MCF 10A (cell line): ENCODE measurements at regions of chr5 and their contacts with region 1.

Region 1: DNA sequence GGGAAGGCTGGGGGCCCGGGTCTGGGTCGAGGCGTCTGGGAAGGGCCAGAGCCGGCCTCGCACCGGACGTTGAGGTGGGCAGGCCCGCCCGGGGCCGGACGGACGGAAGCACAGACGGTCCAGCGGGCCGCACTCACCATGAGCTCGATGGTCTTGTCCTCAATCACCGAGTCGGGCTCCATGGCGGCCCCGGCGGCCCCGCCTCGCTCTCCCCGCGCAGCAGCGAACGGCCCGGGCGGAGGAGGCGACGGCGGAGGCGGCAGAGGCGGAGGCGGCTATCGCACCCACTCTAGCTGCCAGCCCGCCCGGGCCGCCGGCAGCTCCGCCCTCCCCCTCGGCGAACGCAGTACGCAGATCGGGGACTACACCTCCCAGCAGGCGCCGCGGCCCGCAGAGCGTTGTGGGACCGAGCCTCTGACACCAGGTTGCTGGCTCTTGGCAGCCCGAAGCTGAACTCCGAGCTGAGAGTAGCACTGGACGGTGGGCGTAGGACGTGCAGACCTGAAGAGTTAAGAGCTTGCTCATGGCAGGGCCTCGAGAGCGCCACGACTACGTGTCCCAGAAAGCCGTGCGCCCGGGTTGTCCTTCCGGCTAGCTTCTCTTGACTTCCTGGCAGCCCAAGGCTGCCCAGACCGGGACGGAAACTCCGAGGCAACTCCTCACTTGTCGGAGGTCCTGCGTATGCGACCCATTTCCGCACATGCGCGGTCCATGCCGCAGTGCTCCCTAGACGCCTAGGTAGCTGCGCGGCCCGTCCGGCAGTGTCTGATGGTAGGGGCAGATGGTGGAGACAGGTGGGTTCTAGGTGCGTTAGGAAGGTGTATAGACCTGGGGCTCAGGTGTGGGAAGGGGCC is at the start of gene FBXW11:
- DNase-seq: peak; percentile 99
- H3K4me3 Mint-ChIP-seq: peak within 1 kb of the TSS; percentile 90
- H3K27ac Mint-ChIP-seq: peak within 1 kb of the TSS; percentile 95
- H3K4me1 Mint-ChIP-seq: peaks cover 51% of the 10 kb centered on the region
- H3K27me3 Mint-ChIP-seq: no peaks in the 10 kb centered on the region
- CTCF ChIP-seq: no peak
- total RNA-seq, gene FBXW11: 64.7 and 82.7 TPM in 2 replicates

Region 2: GRCh38 chr5:170937914-170938313 is 1068.6 kb before region 1 on chr5:
- CTCF ChIA-PET with region 1: no interaction called
- POLR2A ChIA-PET with region 1: no interaction called
- intact Hi-C with region 1: no loop called
- DNase-seq: no peak
- H3K4me3 Mint-ChIP-seq: no peak overlapping the region
- H3K27ac Mint-ChIP-seq: no peak overlapping the region
- H3K4me1 Mint-ChIP-seq: no peaks in the 10 kb centered on the region
- H3K27me3 Mint-ChIP-seq: no peaks in the 10 kb centered on the region
- CTCF ChIP-seq: no peak

Region 3: DNA sequence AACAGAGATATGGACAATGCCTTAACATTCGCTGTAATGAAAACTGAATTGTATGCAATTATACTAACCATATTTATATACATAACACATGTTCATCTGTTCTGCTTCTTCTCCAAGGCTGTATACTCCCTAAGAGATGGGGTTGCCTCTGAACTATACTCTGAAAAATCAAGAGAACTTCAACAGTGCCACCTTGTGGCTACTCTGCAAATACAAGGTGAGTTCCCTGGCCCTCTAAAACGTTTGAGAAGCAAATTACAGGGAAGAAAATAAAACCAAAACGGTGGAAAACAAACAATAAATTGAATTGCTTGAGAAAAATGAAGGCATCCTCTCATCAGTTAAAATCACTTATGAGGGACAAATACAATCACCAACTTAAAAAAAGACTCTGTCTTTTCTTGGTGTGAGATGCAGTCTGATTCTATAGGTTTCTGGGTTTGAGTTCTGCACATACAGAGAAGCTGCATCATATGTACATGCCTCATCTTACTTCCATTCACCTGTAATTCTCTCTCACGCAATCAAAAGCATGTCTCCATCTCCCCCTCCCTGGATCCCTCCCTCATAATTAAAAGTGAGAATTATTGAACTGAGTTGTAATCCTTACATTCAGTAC is 98.7 kb before region 1 on chr5:
- CTCF ChIA-PET with region 1: interaction called, 153 read pairs
- POLR2A ChIA-PET with region 1: interaction called, 40 read pairs
- intact Hi-C with region 1: loop called (anchors 1 kb)
- DNase-seq: peak; percentile 79
- H3K4me3 Mint-ChIP-seq: no peak overlapping the region
- H3K27ac Mint-ChIP-seq: no peak overlapping the region
- H3K4me1 Mint-ChIP-seq: peaks cover 10% of the 10 kb centered on the region
- H3K27me3 Mint-ChIP-seq: no peaks in the 10 kb centered on the region
- CTCF ChIP-seq: peak; percentile 92

Region 4: GRCh38 chr5:171961117-171961516 is 45.4 kb before region 1 on chr5:
- CTCF ChIA-PET with region 1: interaction called, 6 read pairs
- POLR2A ChIA-PET with region 1: interaction called, 49 read pairs
- intact Hi-C with region 1: no loop called
- DNase-seq: no peak
- H3K4me3 Mint-ChIP-seq: no peak overlapping the region
- H3K27ac Mint-ChIP-seq: no peak overlapping the region
- H3K4me1 Mint-ChIP-seq: peaks cover 31% of the 10 kb centered on the region
- H3K27me3 Mint-ChIP-seq: no peaks in the 10 kb centered on the region
- CTCF ChIP-seq: no peak

Region 5: DNA sequence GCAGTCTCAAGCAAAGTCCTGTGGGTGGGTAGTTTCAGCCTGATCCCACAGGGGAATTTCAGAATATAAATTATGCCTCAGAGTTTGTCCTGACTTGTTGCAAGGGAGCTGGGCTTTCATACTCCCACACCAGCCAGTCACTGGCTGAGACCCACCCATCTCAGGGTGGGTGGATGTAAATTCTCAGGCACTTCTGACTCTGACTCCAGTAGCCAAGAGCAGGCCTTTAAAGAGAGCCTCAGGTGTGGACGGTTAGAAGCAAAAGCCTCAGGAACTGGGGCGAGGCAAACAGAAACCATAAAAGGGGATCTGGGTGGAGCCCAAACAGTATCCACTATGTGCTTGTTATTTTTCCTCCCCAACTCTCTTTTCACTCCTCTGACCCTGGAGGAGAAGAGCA is 28.5 kb after region 1 on chr5:
- CTCF ChIA-PET with region 1: interaction called, 14 read pairs
- POLR2A ChIA-PET with region 1: interaction called, 4 read pairs
- intact Hi-C with region 1: loop called (anchors 2 kb)
- DNase-seq: no peak
- H3K4me3 Mint-ChIP-seq: no peak overlapping the region
- H3K27ac Mint-ChIP-seq: no peak overlapping the region
- H3K4me1 Mint-ChIP-seq: peaks cover 2% of the 10 kb centered on the region
- H3K27me3 Mint-ChIP-seq: no peaks in the 10 kb centered on the region
- CTCF ChIP-seq: no peak

Region 6: GRCh38 chr5:172074896-172075295 is 68.3 kb after region 1 on chr5:
- CTCF ChIA-PET with region 1: no interaction called
- POLR2A ChIA-PET with region 1: no interaction called
- intact Hi-C with region 1: no loop called
- DNase-seq: no peak
- H3K4me3 Mint-ChIP-seq: no peak overlapping the region
- H3K27ac Mint-ChIP-seq: no peak overlapping the region
- H3K4me1 Mint-ChIP-seq: no peaks in the 10 kb centered on the region
- H3K27me3 Mint-ChIP-seq: no peaks in the 10 kb centered on the region
- CTCF ChIP-seq: no peak

Region 7: DNA sequence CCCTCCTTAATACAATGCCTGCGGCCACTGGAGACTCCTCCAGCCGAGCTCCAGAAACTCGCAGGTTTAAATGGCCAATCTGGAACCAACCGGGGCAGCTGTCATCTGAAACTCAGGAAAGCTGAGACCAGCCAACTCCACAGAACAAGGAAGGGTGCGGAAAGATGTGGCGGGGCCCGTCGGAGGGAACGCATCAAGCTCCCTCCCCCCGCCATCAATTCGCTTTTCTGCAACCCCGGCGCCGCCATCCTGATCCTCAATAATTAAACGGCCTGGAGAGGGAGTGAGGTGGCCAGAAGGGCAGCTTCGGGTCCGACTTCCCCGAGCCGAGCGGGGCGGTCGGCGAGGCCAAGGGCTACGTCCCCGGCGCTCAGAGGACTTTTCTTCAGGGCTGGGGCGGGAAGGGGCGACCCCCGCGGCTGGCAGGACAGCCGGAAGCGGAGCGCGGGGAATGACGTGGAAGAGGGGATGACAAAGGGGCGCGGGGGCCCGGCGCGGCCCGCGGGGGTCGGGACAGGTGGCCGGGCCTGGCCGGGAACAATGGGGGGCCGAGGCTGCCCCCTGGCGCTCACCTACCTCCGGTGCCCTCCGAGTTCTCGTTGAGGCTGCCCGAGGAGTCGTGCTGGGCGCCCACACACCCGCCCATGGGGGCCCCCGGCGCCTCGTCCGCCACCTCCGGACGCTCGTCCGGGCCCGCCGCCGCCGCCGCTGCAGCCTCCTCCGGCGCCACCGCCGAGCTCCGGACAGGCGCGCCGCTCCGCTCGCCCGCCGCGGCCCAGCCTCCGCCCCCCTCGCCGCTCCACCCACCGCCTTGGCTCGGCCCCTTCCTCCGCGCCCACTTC is 276.7 kb after region 1 on chr5 and contains the start of gene UBTD2:
- CTCF ChIA-PET with region 1: interaction called, 3 read pairs
- POLR2A ChIA-PET with region 1: interaction called, 42 read pairs
- intact Hi-C with region 1: no loop called
- DNase-seq: peak; percentile 88
- H3K4me3 Mint-ChIP-seq: peak within 1 kb of the TSS; percentile 95
- H3K27ac Mint-ChIP-seq: peak within 1 kb of the TSS; percentile 97
- H3K4me1 Mint-ChIP-seq: peaks cover 29% of the 10 kb centered on the region
- H3K27me3 Mint-ChIP-seq: no peaks in the 10 kb centered on the region
- CTCF ChIP-seq: peak; percentile 76
- total RNA-seq, gene UBTD2: 23.3 and 24.1 TPM in 2 replicates